Endothelial cell of umbilical vein (primary cell): ENCODE measurements at regions of chr6 and their contacts with region 1.

Region 1: GRCh38 chr6:122609856-122610689 is at the start of gene PKIB:
- DNase-seq: peak; percentile 71
- H3K4me3 ChIP-seq: peak within 1 kb of the TSS; percentile 34 to 74 (median 38)
- H3K27ac ChIP-seq: no peak within 1 kb of the TSS
- H3K4me1 ChIP-seq: peaks cover 9% of the 10 kb centered on the region
- H3K27me3 ChIP-seq: peaks cover 7 to 21% of the 10 kb centered on the region in 2 experiments
- CTCF ChIP-seq: peak; percentile 13 to 59
- POLR2A ChIP-seq: no peak
- total RNA-seq, gene PKIB: not detected in 2 replicates

Region 2: DNA sequence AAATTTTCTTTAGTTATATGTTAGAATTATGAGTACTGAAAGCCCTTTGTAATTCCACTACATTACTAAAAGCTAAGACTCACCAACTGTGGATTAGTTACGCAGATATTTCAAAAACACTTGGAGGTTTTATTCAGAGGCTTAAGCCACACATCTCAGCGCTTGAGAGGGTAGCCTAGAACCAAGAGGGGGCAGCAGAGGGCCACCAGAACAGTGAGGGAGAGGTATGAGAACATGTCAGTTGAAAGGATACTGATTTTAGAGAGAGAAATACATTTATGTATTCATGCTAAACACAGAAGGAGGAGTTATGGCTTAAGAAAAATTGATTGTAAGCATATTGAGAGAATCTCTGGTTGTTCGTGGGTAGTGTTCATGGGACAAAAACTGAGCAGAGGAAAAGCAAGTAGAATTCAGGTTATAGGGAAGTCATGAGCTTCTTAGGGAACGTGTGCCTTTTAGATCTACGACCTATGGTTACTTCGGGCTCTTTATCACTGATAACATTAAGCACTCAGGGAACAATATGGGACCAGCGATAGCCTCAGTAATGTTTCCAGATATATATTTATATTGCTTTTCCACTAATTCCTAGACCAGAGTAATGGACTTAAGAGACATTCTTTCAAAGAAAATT is 118.0 kb before region 1 on chr6:
- CTCF ChIA-PET with region 1: interaction called, 5 read pairs
- POLR2A ChIA-PET with region 1: no interaction called
- dilution Hi-C with region 1: no loop called
- intact Hi-C with region 1: loop called (anchors 5 kb)
- DNase-seq: peak; percentile 78
- H3K4me3 ChIP-seq: no peak overlapping the region
- H3K27ac ChIP-seq: no peak overlapping the region
- H3K4me1 ChIP-seq: no peaks in the 10 kb centered on the region
- H3K27me3 ChIP-seq: peaks cover 2 to 12% of the 10 kb centered on the region in 2 experiments
- CTCF ChIP-seq: peak; percentile 76 to 82
- POLR2A ChIP-seq: no peak

Region 3: DNA sequence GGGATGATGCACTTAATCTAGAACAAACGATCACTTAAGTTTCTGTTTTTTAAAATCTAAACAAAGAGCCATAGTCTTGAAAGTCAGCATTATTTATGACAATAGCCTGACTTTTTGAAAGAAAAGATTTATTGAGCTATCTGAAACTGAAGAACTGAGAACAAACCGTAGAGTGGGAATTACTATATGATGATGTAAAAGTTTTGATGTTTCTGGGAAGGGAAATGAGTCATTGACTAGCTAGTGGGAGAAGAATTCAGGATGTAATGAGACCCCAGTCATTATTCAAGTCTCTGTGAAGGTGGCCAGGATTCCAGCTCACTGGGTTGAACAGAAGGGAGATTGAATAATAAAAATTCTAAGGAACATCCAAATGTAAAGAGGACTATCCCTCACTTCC is 86.0 kb after region 1 on chr6:
- CTCF ChIA-PET with region 1: interaction called, 5 read pairs
- POLR2A ChIA-PET with region 1: no interaction called
- dilution Hi-C with region 1: no loop called
- intact Hi-C with region 1: loop called (anchors 5 kb)
- DNase-seq: peak; percentile 79
- H3K4me3 ChIP-seq: no peak overlapping the region
- H3K27ac ChIP-seq: peak overlapping the region; percentile 43
- H3K4me1 ChIP-seq: peaks cover 12% of the 10 kb centered on the region
- H3K27me3 ChIP-seq: no peaks in the 10 kb centered on the region
- CTCF ChIP-seq: no peak
- POLR2A ChIP-seq: no peak

Region 4: GRCh38 chr6:122789182-122790027 is 179.3 kb after region 1 on chr6 and contains the start of gene SMPDL3A:
- CTCF ChIA-PET with region 1: no interaction called
- POLR2A ChIA-PET with region 1: no interaction called
- dilution Hi-C with region 1: no loop called
- intact Hi-C with region 1: loop called (anchors 1 kb)
- DNase-seq: peak; percentile 77
- H3K4me3 ChIP-seq: peak within 1 kb of the TSS; percentile 53 to 91 (median 58)
- H3K27ac ChIP-seq: peak within 1 kb of the TSS; percentile 31
- H3K4me1 ChIP-seq: peaks cover 6% of the 10 kb centered on the region
- H3K27me3 ChIP-seq: peaks cover 9 to 21% of the 10 kb centered on the region in 2 experiments
- CTCF ChIP-seq: peak; percentile 35 to 55
- POLR2A ChIP-seq: peak; percentile 9
- total RNA-seq, gene SMPDL3A: 4.1 TPM in 2 replicates